GM12878 (cell line): ENCODE measurements at regions of chr7 and their contacts with region 1.

Region 1: DNA sequence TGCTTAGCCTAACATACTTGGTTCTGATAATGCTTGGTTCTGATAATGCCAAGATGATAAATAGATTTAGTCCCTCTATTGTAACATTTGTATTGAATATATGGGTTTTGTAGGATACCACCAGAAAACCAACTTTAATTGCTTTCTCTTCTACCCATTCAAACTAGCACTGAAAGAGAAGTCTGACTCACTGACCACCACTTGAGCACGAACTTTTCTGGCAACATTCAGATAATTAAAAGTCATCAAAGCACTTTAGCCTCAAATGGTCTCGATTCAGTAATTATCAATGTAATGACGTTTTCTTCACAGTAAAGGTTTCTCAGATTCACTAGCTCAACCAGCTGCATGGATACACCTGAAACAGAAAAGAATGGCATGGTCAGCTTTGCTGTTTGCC is 63.0 kb downstream of the HDAC9 start:
- DNase-seq: no peak
- ATAC-seq: peak; percentile 71
- H3K4me3 ChIP-seq: no peak overlapping the region
- H3K27ac ChIP-seq: no peak overlapping the region
- H3K4me1 ChIP-seq: no peaks in the 10 kb centered on the region
- H3K27me3 ChIP-seq: no peaks in the 10 kb centered on the region
- CTCF ChIP-seq: no peak
- EP300 ChIP-seq: no peak
- POLR2A ChIP-seq: no peak
- RAD21 ChIP-seq: no peak

Region 2: GRCh38 chr7:18378989-18379605 is 179.4 kb before region 1 on chr7:
- CTCF ChIA-PET with region 1: no interaction called
- POLR2A ChIA-PET with region 1: no interaction called
- RAD21 ChIA-PET with region 1: no interaction called
- SMC1A ChIA-PET with region 1: no interaction called
- in situ Hi-C with region 1: no loop called
- intact Hi-C with region 1: no loop called
- DNase-seq: no peak
- ATAC-seq: no peak
- H3K4me3 ChIP-seq: no peak overlapping the region
- H3K27ac ChIP-seq: no peak overlapping the region
- H3K4me1 ChIP-seq: no peaks in the 10 kb centered on the region
- H3K27me3 ChIP-seq: no peaks in the 10 kb centered on the region
- CTCF ChIP-seq: no peak
- EP300 ChIP-seq: no peak
- POLR2A ChIP-seq: no peak
- RAD21 ChIP-seq: no peak

Region 3: DNA sequence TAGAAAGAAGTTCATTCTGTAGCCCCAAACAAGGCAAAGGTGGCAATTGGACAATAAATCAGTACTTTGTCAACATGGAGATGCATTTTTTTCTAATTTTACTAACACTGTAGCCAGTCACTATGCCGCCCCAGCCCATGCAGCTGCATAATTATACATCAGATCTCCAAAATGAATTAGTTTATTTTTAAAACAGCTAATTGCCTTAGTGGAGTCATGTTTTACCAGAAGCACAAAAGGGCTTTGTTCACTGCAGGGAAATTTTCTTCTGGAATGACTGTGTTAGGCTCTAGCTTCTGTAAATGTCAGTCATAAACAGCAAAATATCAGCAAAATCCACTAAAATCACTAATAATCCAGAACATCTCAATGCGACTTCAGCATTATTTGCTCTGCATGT is 83.0 kb before region 1 on chr7:
- CTCF ChIA-PET with region 1: no interaction called
- POLR2A ChIA-PET with region 1: no interaction called
- RAD21 ChIA-PET with region 1: no interaction called
- SMC1A ChIA-PET with region 1: no interaction called
- in situ Hi-C with region 1: no loop called
- intact Hi-C with region 1: no loop called
- DNase-seq: no peak
- ATAC-seq: no peak
- H3K4me3 ChIP-seq: no peak overlapping the region
- H3K27ac ChIP-seq: no peak overlapping the region
- H3K4me1 ChIP-seq: no peaks in the 10 kb centered on the region
- H3K27me3 ChIP-seq: no peaks in the 10 kb centered on the region
- CTCF ChIP-seq: no peak
- EP300 ChIP-seq: no peak
- POLR2A ChIP-seq: no peak
- RAD21 ChIP-seq: no peak

Region 4: DNA sequence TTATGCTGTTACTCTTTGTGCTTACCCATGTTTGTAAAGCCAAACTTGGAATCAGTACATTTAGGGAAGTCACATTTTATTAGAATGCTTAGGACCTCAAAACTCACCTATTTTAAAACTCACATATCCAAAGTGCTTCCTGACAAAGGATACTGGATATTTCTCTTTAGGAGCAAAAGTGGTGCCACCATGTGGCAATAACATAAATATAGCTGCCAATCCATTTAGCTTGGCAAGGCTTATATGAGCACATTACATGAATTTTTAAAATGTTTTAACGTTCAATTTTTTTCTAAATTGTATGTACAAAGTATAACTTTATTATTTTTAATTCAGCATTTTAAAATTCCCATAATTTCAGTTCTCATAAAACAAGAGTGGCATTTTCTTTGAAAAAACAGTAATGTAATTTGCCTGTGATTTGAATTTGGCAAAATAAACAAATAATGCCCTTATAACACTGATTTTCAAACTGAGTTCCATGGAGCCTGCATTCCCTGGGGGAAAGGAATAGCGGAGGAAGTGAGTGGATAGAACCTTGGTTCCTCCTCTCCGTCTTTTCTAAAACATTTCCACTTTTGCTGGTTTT is 12.5 kb after region 1 on chr7:
- CTCF ChIA-PET with region 1: interaction called, 10 read pairs
- POLR2A ChIA-PET with region 1: no interaction called
- RAD21 ChIA-PET with region 1: no interaction called
- SMC1A ChIA-PET with region 1: interaction called, 3 read pairs
- in situ Hi-C with region 1: no loop called
- intact Hi-C with region 1: no loop called
- DNase-seq: no peak
- ATAC-seq: no peak
- H3K4me3 ChIP-seq: no peak overlapping the region
- H3K27ac ChIP-seq: no peak overlapping the region
- H3K4me1 ChIP-seq: no peaks in the 10 kb centered on the region
- H3K27me3 ChIP-seq: no peaks in the 10 kb centered on the region
- CTCF ChIP-seq: peak in 2 of 3 experiments; percentile 26 to 34; a peak in 2 of 6 replicates
- EP300 ChIP-seq: no peak
- POLR2A ChIP-seq: no peak
- RAD21 ChIP-seq: peak; percentile 43; the same call in 1 of the 2 replicates

Region 5: DNA sequence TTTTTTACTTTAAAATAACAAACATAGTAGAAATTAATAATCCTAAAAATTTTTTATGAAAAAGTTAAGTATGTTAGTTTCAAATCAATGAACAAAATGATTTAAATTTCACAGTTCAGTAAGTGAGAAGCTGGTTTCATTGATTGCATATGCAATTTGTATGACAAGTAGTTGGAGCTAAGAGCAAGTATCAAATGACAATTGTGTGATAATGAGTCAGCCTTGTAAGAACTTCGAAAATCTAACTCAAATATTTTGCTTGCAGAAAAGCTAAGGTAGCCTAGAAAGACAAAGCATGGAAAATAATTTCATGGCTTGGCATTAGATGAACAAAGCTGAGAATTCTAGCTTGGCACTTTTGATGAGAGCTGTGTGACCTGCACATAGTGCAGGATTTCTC is 48.5 kb after region 1 on chr7:
- CTCF ChIA-PET with region 1: no interaction called
- POLR2A ChIA-PET with region 1: no interaction called
- RAD21 ChIA-PET with region 1: no interaction called
- SMC1A ChIA-PET with region 1: no interaction called
- in situ Hi-C with region 1: no loop called
- intact Hi-C with region 1: no loop called
- DNase-seq: no peak
- ATAC-seq: no peak
- H3K4me3 ChIP-seq: no peak overlapping the region
- H3K27ac ChIP-seq: no peak overlapping the region
- H3K4me1 ChIP-seq: no peaks in the 10 kb centered on the region
- H3K27me3 ChIP-seq: no peaks in the 10 kb centered on the region
- CTCF ChIP-seq: no peak
- EP300 ChIP-seq: no peak
- POLR2A ChIP-seq: no peak
- RAD21 ChIP-seq: no peak